ENCODE measurements at regions of chr3 and their contacts with region 1.

Region 1: DNA sequence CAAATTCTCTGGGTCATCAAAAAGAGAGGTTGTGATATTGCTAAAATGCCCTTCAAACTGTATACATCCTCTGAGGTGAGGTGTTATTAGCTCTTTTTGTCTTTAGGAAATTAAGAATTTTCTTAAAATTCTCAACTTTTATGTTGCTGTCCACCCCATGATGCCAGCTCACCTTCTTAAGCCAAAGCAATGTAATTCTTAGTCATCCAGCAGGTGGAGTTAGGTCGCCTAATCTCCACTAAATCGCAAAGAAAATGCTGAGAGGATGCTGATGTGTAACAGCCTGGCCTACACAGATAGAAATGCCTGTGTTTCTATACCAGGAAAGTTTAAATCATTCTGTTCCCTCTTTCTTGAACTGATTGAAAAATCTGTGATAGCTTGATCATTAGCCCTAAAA is 770.2 kb upstream of the ALCAM start:
- DNase-seq: peak; percentile 25
- H3K27ac ChIP-seq: no peak overlapping the region
- CTCF ChIP-seq: peak; percentile 64

Region 2: DNA sequence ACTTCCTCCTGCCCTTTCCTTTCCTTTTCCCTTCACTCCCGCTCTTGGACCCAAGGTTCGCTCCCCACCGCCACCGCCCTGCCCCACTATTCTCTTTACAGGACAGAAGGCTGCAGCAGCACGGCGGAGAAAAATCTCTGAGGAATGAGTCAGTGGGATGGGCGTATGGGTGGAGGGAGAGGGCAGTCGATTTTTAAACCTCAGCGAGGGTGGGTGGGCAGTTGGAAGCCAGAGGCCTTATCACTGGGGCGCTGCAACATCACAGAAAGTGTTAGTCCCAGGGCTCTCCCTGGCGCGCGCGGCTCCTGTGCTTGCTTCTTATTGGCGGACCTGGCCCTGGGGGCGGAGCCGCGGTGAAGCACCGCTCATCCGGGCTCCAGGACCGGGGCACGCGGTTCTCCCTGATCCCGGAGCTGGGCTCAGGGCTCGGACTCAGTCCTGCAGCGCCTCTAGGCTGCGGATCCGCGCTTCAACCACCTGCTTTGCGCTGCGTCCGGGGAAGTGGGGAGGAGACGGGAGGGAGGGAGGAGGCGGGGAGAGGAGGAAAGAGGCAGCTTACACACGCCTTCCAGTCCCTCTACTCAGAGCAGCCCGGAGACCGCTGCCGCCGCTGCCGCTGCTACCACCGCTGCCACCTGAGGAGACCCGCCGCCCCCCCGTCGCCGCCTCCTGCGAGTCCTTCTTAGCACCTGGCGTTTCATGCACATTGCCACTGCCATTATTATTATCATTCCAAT is 769.9 kb after region 1 on chr3 and contains the start of gene ALCAM:
- CTCF ChIA-PET with region 1: interaction called, 10 read pairs
- POLR2A ChIA-PET with region 1: no interaction called
- DNase-seq: peak; percentile 88
- H3K27ac ChIP-seq: peak within 1 kb of the TSS; percentile 97
- CTCF ChIP-seq: peak; percentile 82